Adrenal gland (tissue), 19 donors: ENCODE measurements at regions of chr21 and their contacts with region 1.

Region 1: GRCh38 chr21:39388038-39388810 is 39.3 kb upstream of the HMGN1 start:
- DNase-seq: peak; percentile 88 to 94 (median 92)
- H3K4me3 ChIP-seq: peak overlapping the region in 2 of 4 donors; percentile 20 to 68
- H3K27ac ChIP-seq: peak overlapping the region; percentile 2 to 86 (median 67)
- H3K4me1 ChIP-seq: peaks cover 4 to 26% of the 10 kb centered on the region in 2 donors
- H3K27me3 ChIP-seq: no peaks in the 10 kb centered on the region
- CTCF ChIP-seq: peak; percentile 80 to 97 (median 90)
- POLR2A ChIP-seq: no peak

Region 2: GRCh38 chr21:39183237-39184007 is 204.8 kb before region 1 on chr21 and contains the start of gene PSMG1:
- intact Hi-C with region 1: loop called in 1 of 2 experiments (anchors 10 kb)
- DNase-seq: peak; percentile 94 to 98 (median 96)
- H3K4me3 ChIP-seq: peak within 1 kb of the TSS; percentile 39 to 90 (median 72)
- H3K27ac ChIP-seq: peak within 1 kb of the TSS; percentile 83 to 94 (median 86)
- H3K4me1 ChIP-seq: peaks cover 7 to 22% of the 10 kb centered on the region in 2 donors
- H3K27me3 ChIP-seq: no peaks in the 10 kb centered on the region
- CTCF ChIP-seq: no peak
- POLR2A ChIP-seq: peak; percentile 80 to 91
- total RNA-seq, gene PSMG1: 19.0 to 59.8 (median 36.1) TPM

Region 3: DNA sequence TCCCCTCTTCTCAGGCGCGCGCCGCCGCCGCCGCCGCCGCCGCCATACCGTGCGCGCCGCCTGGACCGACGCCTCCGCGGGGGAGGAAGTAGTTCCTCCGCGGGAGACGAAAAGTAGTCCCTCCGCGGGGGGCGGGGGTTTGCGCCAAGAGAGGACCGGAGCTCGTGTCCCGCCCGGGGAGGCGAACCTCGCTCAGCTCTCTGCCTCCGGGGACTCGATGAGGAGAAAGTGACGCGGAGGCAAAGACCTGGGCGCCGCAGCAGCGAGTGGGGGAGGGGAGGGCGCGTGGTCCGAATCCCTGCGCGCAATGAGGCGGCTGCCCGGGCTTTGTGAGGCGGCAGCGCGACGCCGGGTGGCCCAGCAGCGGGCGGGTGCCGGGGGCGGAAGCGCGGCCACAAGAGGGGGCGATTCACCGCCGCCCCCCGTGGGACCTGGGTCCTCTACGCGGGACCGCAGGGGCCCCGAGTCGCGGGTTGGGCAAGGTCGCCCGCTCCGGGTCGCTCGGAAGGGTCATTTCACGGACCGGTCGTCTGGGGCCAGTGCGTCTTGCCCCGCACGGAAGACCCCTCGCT is 74.6 kb before region 1 on chr21 and contains the start of gene BRWD1:
- intact Hi-C with region 1: loop called (anchors 5 kb)
- DNase-seq: peak; percentile 76 to 87 (median 81)
- H3K4me3 ChIP-seq: peak within 1 kb of the TSS; percentile 40 to 90 (median 78)
- H3K27ac ChIP-seq: peak within 1 kb of the TSS; percentile 83 to 97 (median 93)
- H3K4me1 ChIP-seq: peaks cover 17 to 23% of the 10 kb centered on the region in 2 donors
- H3K27me3 ChIP-seq: no peaks in the 10 kb centered on the region
- CTCF ChIP-seq: peak in 4 of 6 experiments; percentile 19 to 38 (median 22)
- POLR2A ChIP-seq: peak; percentile 38 to 71
- total RNA-seq, gene BRWD1: 28.9 to 81.1 (median 42.6) TPM

Region 4: DNA sequence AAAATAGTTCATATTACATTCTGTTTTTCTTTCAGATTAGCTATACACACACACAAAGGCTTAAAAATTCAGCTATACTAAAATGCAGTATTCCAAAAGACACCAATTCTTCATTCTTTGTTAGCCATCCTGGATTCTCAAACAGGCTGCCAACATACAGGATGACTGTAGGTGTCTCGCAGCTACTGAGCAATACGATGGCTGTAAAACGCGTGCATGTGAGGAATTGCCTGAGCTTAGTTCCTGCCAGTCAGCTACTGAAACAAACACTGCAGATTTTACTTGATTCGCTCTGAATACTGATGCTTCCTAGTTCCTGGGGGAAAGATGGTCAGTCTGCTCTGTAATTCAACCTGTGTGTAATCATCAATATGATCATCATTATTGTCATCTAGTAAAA is 14.6 kb before region 1 on chr21:
- intact Hi-C with region 1: loop called in 1 of 2 experiments (anchors 2 kb)
- DNase-seq: peak in 3 of 7 donors; percentile 45 to 67 (median 57)
- H3K4me3 ChIP-seq: no peak overlapping the region
- H3K27ac ChIP-seq: no peak overlapping the region
- H3K4me1 ChIP-seq: no peaks in the 10 kb centered on the region
- H3K27me3 ChIP-seq: no peaks in the 10 kb centered on the region
- CTCF ChIP-seq: peak in 5 of 6 experiments; percentile 27 to 44 (median 42)
- POLR2A ChIP-seq: no peak